ENCODE measurements at regions of chr5 and their contacts with region 1.

Region 1: GRCh38 chr5:108642167-108642906 is 105.4 kb upstream of the FER start:
- DNase-seq: peak; percentile 54
- H3K4me3 ChIP-seq: peak overlapping the region in 1 of 3 experiments; percentile 8
- H3K27ac ChIP-seq: no peak overlapping the region
- H3K4me1 ChIP-seq: peaks cover 5% of the 10 kb centered on the region
- H3K27me3 ChIP-seq: no peaks in the 10 kb centered on the region
- CTCF ChIP-seq: peak; percentile 94 to 96

Region 2: GRCh38 chr5:108521841-108522506 is 120.4 kb before region 1 on chr5:
- CTCF ChIA-PET with region 1: no interaction called
- dilution Hi-C with region 1: no loop called
- in situ Hi-C with region 1: no loop called
- intact Hi-C with region 1: loop called (anchors 5 kb)
- DNase-seq: peak; percentile 48
- H3K4me3 ChIP-seq: no peak overlapping the region
- H3K27ac ChIP-seq: no peak overlapping the region
- H3K4me1 ChIP-seq: no peaks in the 10 kb centered on the region
- H3K27me3 ChIP-seq: peaks cover 3% of the 10 kb centered on the region
- CTCF ChIP-seq: peak; percentile 73 to 74

Region 3: DNA sequence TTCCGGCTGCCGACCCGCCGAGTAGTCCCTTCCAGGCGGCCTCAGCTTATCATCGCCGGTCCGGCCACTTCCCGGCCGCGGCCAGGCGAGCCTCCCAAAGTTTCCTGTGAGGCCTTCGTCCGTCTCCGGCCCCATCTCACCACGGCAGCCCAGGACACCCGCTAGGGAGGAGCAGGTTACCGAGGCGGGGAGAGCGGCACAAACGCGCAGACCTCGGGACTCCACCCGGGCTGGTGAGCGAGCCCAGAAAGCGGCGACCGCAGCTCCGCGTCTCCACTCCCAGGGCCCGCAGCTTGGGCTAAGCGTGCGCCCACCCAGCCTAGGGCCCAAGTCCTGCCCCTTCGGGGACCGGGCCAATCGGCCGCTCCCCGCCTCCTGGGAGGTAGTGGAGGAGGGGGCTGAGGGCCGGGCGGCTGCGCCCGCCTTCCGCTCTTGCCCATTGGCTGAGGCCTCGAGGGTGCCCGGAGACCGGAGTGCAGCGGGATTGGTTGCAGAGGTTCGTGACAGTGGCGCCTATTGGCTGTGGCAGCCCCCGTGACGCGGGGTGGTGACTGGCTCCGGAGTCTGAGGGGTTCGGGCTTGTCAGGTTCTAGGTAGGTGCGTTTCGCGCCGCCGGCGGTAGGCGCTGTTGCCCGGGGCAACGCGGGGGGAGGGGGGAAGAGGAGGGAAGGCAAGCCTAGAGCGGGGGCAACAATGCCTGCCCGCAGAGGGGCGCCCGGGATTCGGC is 106.2 kb after region 1 on chr5:
- CTCF ChIA-PET with region 1: no interaction called
- dilution Hi-C with region 1: no loop called
- in situ Hi-C with region 1: no loop called
- intact Hi-C with region 1: loop called (anchors 2 kb)
- DNase-seq: peak; percentile 100
- H3K4me3 ChIP-seq: peak overlapping the region; percentile 93 to 97 (median 97)
- H3K27ac ChIP-seq: peak overlapping the region; percentile 100
- H3K4me1 ChIP-seq: peaks cover 12% of the 10 kb centered on the region
- H3K27me3 ChIP-seq: no peaks in the 10 kb centered on the region
- CTCF ChIP-seq: peak in 1 of 2 donors; percentile 13

Region 4: GRCh38 chr5:109329333-109330237 is 687.2 kb after region 1 on chr5:
- CTCF ChIA-PET with region 1: no interaction called
- dilution Hi-C with region 1: no loop called
- in situ Hi-C with region 1: no loop called
- intact Hi-C with region 1: loop called (anchors 10 kb)
- DNase-seq: peak; percentile 26
- H3K4me3 ChIP-seq: no peak overlapping the region
- H3K27ac ChIP-seq: no peak overlapping the region
- H3K4me1 ChIP-seq: peaks cover 6% of the 10 kb centered on the region
- H3K27me3 ChIP-seq: no peaks in the 10 kb centered on the region
- CTCF ChIP-seq: no peak

Region 5: GRCh38 chr5:109468737-109469420 is 826.5 kb after region 1 on chr5:
- CTCF ChIA-PET with region 1: no interaction called
- dilution Hi-C with region 1: no loop called
- in situ Hi-C with region 1: loop called in 1 of 2 experiments (anchors 25 kb)
- intact Hi-C with region 1: loop called (anchors 5 kb)
- DNase-seq: peak; percentile 73
- H3K4me3 ChIP-seq: no peak overlapping the region
- H3K27ac ChIP-seq: no peak overlapping the region
- H3K4me1 ChIP-seq: peaks cover 6% of the 10 kb centered on the region
- H3K27me3 ChIP-seq: no peaks in the 10 kb centered on the region
- CTCF ChIP-seq: peak; percentile 74 to 85